ENCODE measurements at regions of chr7 and their contacts with region 1.

Region 1: GRCh38 chr7:22822486-22823141 is at the start of gene TOMM7:
- DNase-seq: peak; percentile 84 to 95
- H3K4me3 ChIP-seq: peak within 1 kb of the TSS; percentile 92 to 97 (median 94)
- H3K27ac ChIP-seq: peak within 1 kb of the TSS; percentile 74
- H3K4me1 ChIP-seq: peaks cover 0 to 12% (median 6%) of the 10 kb centered on the region in 4 experiments; a peak in 5 of 7 replicates
- H3K27me3 ChIP-seq: no peaks in the 10 kb centered on the region
- CTCF ChIP-seq: peak in 2 of 3 experiments; percentile 46 to 50; a peak in 2 of 4 replicates
- EP300 ChIP-seq: no peak
- POLR2A ChIP-seq: peak; percentile 69 to 89
- RAD21 ChIP-seq: peak in 1 of 2 experiments; percentile 13; a peak in 3 of 4 replicates
- total RNA-seq, gene TOMM7: 389 and 406 TPM in 2 replicates

Region 2: GRCh38 chr7:22720791-22721786 is 101.5 kb before region 1 on chr7:
- CTCF ChIA-PET with region 1: no interaction called
- POLR2A ChIA-PET with region 1: no interaction called
- DNase-seq: no peak
- H3K4me3 ChIP-seq: no peak overlapping the region
- H3K27ac ChIP-seq: no peak overlapping the region
- H3K4me1 ChIP-seq: peaks cover 0 to 2% (median 0%) of the 10 kb centered on the region in 4 experiments; a peak in 1 of 7 replicates
- H3K27me3 ChIP-seq: peaks cover 0 to under 1% (median 0%) of the 10 kb centered on the region in 4 experiments; a peak in 2 of 7 replicates
- CTCF ChIP-seq: no peak
- EP300 ChIP-seq: no peak
- POLR2A ChIP-seq: no peak
- RAD21 ChIP-seq: no peak

Region 3: GRCh38 chr7:22791204-22792158 is 31.1 kb before region 1 on chr7:
- CTCF ChIA-PET with region 1: no interaction called
- POLR2A ChIA-PET with region 1: no interaction called
- DNase-seq: no peak
- H3K4me3 ChIP-seq: no peak overlapping the region
- H3K27ac ChIP-seq: no peak overlapping the region
- H3K4me1 ChIP-seq: no peaks in the 10 kb centered on the region
- H3K27me3 ChIP-seq: no peaks in the 10 kb centered on the region
- CTCF ChIP-seq: no peak
- EP300 ChIP-seq: no peak
- POLR2A ChIP-seq: no peak
- RAD21 ChIP-seq: no peak

Region 4: DNA sequence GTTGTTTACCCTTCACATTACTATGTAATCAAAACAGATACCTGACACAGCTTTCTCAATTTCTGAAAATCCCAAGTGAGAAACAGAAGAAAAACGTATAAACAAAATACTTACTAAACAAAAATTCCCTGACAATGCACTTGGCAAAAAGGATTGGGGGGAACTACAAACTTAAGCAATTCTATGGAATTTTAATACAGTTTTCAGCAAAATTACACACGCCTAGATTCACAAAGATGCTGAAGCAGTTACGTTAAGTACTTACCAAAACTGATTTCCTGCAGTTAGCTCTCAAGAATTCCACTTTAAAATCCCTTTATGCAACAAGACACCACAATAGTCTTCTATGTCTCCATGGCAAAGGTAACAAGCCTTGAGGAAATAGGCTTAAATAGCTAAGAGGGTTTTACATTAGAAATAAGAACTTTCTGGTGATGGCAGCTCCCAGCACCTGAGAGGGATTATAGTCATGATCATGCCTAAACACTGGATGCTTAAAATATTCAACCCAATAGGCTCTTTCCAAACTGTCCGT is 10.8 kb before region 1 on chr7:
- CTCF ChIA-PET with region 1: interaction called, 9 read pairs
- POLR2A ChIA-PET with region 1: interaction called, 42 read pairs
- DNase-seq: no peak
- H3K4me3 ChIP-seq: no peak overlapping the region
- H3K27ac ChIP-seq: 0 out of 2 replicates have a peak overlapping the region, but pooled peaks have one; percentile 26
- H3K4me1 ChIP-seq: peaks cover 0 to 24% (median 14%) of the 10 kb centered on the region in 4 experiments
- H3K27me3 ChIP-seq: no peaks in the 10 kb centered on the region
- CTCF ChIP-seq: no peak
- EP300 ChIP-seq: no peak
- POLR2A ChIP-seq: no peak
- RAD21 ChIP-seq: no peak

Region 5: DNA sequence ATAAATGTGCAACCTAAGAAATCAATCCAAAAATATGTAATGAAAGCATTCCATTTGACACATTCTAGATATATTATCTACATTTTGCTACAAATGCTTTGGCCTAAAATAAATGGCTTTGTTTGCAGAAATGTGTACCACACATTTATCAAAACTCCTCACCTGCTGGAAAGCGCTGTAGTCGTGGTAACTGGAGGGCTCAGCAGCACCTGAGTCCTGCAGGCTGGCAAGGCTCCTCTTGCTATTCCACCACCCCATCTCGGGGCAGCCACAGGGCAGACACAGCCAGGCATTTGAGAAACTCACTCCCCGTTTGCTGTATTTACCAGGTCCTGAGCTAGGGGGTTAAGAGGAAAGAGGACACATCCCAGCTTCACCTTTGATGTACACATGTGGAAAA is 68.2 kb after region 1 on chr7:
- CTCF ChIA-PET with region 1: no interaction called
- POLR2A ChIA-PET with region 1: no interaction called
- DNase-seq: peak in 1 of 2 experiments; percentile 37
- H3K4me3 ChIP-seq: no peak overlapping the region
- H3K27ac ChIP-seq: no peak overlapping the region
- H3K4me1 ChIP-seq: peaks cover 0 to 5% (median 0%) of the 10 kb centered on the region in 4 experiments; a peak in 2 of 7 replicates
- H3K27me3 ChIP-seq: no peaks in the 10 kb centered on the region; a peak in 1 of 7 replicates
- CTCF ChIP-seq: no peak
- EP300 ChIP-seq: no peak
- POLR2A ChIP-seq: no peak
- RAD21 ChIP-seq: no peak

Region 6: GRCh38 chr7:22920672-22921071 is 98.1 kb after region 1 on chr7:
- CTCF ChIA-PET with region 1: no interaction called
- POLR2A ChIA-PET with region 1: no interaction called
- DNase-seq: no peak
- H3K4me3 ChIP-seq: no peak overlapping the region
- H3K27ac ChIP-seq: no peak overlapping the region
- H3K4me1 ChIP-seq: no peaks in the 10 kb centered on the region
- H3K27me3 ChIP-seq: no peaks in the 10 kb centered on the region
- CTCF ChIP-seq: no peak
- EP300 ChIP-seq: no peak
- POLR2A ChIP-seq: no peak
- RAD21 ChIP-seq: no peak